Activated naive CD4-positive, alpha-beta T cell treated with anti-CD3 and anti-CD28 coated beads for 36 hours (primary cell): ENCODE measurements at regions of chr7 and their contacts with region 1.

Region 1: DNA sequence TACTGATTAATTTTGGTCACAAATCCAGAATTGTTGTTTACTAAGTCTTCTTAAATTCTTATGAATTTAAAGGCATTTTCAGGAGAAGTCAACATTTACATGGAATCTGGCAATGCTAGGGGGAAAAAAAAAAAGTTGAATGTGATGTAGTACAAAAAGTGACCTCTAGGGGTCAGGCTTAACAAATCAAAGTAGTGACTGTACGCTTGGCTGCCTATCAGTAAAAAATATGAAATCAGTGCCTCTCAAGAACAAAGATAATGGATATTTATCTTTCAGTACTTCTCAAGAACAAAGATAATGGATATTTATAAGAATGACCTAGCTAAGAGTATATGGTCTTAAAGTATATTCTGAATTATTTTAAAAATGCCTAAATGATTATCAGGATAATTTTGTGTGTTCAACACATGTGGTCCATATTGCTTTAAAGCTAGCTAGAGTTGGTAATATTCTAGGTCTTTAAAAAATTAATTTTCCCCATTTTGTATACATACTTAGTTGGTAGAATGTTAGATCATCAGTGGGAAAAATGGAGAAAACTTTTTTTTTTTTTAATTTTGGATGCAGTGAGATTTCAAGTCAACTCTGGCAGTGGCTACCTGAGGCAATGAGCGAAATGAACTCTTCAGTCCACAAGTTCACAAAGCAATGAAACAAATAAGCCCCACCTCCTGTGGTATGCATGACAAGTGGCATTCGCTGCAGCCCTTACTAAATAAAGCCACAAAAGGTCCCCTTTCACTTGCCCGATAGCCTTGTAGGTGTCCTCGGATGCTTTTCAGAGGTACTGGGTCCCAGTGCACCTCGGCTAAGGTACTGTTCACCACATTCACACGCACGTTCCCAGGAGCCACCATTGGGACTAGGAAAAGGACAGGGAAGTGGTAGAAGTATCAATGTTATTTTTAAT is 51.2 kb upstream of the LAMB4 start:
- DNase-seq: no peak
- H3K4me3 Mint-ChIP-seq: no peak overlapping the region
- H3K27ac Mint-ChIP-seq: no peak overlapping the region
- H3K4me1 Mint-ChIP-seq: no peaks in the 10 kb centered on the region
- H3K27me3 Mint-ChIP-seq: no peaks in the 10 kb centered on the region

Region 2: GRCh38 chr7:108384721-108385481 is 203.6 kb after region 1 on chr7:
- CTCF ChIA-PET with region 1: no interaction called
- intact Hi-C with region 1: loop called (anchors 5 kb)
- DNase-seq: no peak
- H3K4me3 Mint-ChIP-seq: no peak overlapping the region
- H3K27ac Mint-ChIP-seq: no peak overlapping the region
- H3K4me1 Mint-ChIP-seq: peaks cover 3% of the 10 kb centered on the region
- H3K27me3 Mint-ChIP-seq: no peaks in the 10 kb centered on the region

Region 3: DNA sequence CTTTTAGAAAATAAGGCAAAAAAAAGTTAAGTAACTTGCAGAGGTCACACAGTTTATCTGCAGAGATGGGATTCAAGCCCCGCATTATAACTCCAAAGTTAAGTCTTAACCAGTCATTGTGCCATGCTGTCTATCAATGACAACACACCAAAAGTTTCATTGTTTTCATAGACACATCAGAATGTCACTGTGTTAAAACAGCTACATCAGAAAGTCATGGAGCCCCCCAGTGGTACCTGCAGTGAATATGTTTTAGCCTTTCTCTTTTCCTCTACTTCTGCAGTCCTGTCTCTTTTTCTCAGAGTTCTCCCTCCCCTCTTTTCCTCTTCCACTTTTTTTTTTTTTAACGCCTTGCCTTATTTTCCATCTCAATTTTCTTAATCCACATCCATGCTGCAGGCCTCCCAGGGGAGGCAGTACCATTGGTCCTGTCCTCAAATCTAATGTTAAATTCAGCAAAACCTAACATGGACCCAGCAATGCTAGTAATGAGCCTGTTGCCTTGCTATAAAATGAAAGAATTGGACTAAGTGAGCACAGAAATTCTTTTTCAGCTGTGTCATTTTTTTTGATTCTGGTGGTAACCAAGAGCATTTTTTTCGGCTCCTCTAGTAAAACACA is 278.7 kb after region 1 on chr7:
- CTCF ChIA-PET with region 1: interaction called, 8 read pairs
- intact Hi-C with region 1: loop called (anchors 1 kb)
- DNase-seq: peak; percentile 56
- H3K4me3 Mint-ChIP-seq: no peak overlapping the region
- H3K27ac Mint-ChIP-seq: no peak overlapping the region
- H3K4me1 Mint-ChIP-seq: peaks cover 30% of the 10 kb centered on the region
- H3K27me3 Mint-ChIP-seq: peaks cover 22% of the 10 kb centered on the region

Region 4: GRCh38 chr7:108874852-108875538 is 693.7 kb after region 1 on chr7:
- CTCF ChIA-PET with region 1: no interaction called
- intact Hi-C with region 1: loop called (anchors 2 kb)
- DNase-seq: peak; percentile 28
- H3K4me3 Mint-ChIP-seq: no peak overlapping the region
- H3K27ac Mint-ChIP-seq: no peak overlapping the region
- H3K4me1 Mint-ChIP-seq: no peaks in the 10 kb centered on the region
- H3K27me3 Mint-ChIP-seq: no peaks in the 10 kb centered on the region